Activated CD4-positive, alpha-beta T cell treated with anti-CD3 and anti-CD28 coated beads for 36 hours (primary cell): ENCODE measurements at regions of chr12 and their contacts with region 1.

Region 1: GRCh38 chr12:4538207-4539160 is at the start of gene RAD51AP1:
- DNase-seq: peak; percentile 97
- ATAC-seq: peak; percentile 97
- H3K4me3 Mint-ChIP-seq: peak within 1 kb of the TSS; percentile 91
- H3K27ac Mint-ChIP-seq: peak within 1 kb of the TSS; percentile 96
- H3K4me1 Mint-ChIP-seq: peaks cover 26% of the 10 kb centered on the region
- H3K27me3 Mint-ChIP-seq: no peaks in the 10 kb centered on the region
- total RNA-seq, gene RAD51AP1: 44.6 to 50.9 TPM

Region 2: DNA sequence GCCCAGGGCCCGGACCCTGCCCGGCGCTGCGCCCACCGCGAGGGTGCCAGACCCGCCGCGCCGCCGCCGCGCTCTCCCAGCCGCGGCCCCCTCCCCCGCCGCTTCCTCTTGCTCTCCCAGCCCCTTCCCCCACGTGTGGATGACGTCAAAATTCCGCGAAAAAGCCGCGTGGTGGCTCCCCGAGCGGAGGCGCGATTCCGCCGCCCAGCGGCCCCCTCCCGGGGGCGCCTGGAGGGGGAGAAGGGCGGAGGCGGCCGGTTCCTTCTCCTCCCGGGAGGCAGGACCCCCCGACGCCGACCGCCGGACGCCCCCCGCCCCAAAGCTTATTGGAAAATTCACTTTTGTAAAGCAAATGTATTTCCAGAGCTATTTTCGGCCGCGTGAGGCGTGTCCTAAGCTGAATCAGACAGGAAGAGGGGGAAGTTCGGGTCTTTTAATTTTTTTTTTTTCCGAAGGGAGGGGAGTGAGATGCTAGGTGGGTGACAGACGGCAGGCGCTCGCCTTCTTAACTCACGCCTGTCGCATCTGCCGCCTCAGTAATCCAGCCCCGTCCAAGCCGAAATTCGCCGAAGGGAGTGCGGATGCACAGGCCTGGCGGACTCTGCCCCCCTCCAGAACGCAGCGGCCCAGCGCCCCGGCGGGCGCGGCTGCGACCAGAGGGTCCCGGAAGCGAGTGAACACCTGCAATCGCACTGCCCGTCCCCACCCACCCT is 269.0 kb before region 1 on chr12:
- CTCF ChIA-PET with region 1: no interaction called
- POLR2A ChIA-PET with region 1: no interaction called
- intact Hi-C with region 1: loop called in 1 of 2 experiments (anchors 1 kb)
- DNase-seq: peak; percentile 97
- ATAC-seq: peak; percentile 14
- H3K4me3 Mint-ChIP-seq: peak overlapping the region; percentile 95
- H3K27ac Mint-ChIP-seq: peak overlapping the region; percentile 100
- H3K4me1 Mint-ChIP-seq: peaks cover 23% of the 10 kb centered on the region
- H3K27me3 Mint-ChIP-seq: no peaks in the 10 kb centered on the region

Region 3: DNA sequence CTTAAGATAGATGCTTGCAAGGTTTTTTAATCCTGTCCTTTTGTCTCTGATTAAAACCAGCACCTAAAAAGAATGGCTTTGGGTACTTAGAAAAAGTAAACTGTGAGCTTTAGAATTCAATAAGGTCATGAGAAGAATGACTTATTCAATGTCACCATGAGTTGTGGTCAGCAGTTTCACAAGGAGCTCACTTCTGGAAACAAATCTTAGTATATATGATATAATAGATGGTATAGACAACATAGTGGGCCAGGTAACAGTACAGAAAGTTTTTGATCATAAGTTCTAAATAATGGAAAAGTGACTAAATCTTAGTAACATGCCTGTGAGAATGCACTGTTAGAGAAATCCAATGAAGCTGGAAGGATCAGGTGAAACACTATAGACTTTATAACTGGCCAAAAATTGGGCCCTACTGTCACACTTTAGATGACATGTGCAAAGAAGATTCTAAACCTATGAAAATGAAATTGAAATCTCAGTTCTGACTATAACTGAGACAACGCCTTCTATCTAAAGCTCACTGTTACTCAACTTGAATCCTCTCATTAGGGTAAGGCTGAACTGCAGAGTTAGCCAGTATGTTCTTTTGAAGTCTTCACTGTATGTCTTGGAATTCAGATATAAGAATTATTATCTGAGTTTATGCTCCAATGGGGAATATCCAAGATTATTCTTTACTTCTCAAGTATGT is 42.2 kb before region 1 on chr12:
- CTCF ChIA-PET with region 1: no interaction called
- POLR2A ChIA-PET with region 1: no interaction called
- intact Hi-C with region 1: loop called in 1 of 2 experiments (anchors 5 kb)
- DNase-seq: no peak
- ATAC-seq: peak; percentile 98
- H3K4me3 Mint-ChIP-seq: no peak overlapping the region
- H3K27ac Mint-ChIP-seq: peak overlapping the region; percentile 80
- H3K4me1 Mint-ChIP-seq: peaks cover 19% of the 10 kb centered on the region
- H3K27me3 Mint-ChIP-seq: no peaks in the 10 kb centered on the region

Region 4: DNA sequence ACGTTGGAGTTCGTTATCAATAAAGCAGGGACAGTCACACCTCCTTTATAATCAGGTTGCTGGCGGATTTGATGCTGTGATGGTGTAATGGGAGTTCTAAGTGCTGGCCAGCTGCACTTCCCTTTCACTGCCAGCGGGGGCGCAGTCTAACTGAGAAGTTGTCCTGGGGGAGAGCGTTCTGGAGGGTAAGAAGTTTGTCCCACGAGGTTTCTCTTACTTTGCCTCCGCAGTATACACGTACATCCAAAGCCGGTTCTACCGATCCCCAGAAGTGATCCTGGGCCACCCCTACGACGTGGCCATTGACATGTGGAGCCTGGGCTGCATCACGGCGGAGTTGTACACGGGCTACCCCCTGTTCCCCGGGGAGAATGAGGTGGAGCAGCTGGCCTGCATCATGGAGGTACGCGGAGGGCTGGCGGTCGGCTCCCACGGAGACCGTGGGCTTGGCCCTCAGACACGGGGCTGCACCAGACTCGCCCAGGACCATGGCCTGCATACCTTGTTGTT is 66.3 kb after region 1 on chr12:
- CTCF ChIA-PET with region 1: no interaction called
- POLR2A ChIA-PET with region 1: no interaction called
- intact Hi-C with region 1: loop called in 1 of 2 experiments (anchors 1 kb)
- DNase-seq: peak; percentile 90
- ATAC-seq: peak; percentile 98
- H3K4me3 Mint-ChIP-seq: peak overlapping the region; percentile 95
- H3K27ac Mint-ChIP-seq: peak overlapping the region; percentile 96
- H3K4me1 Mint-ChIP-seq: peaks cover 18% of the 10 kb centered on the region
- H3K27me3 Mint-ChIP-seq: no peaks in the 10 kb centered on the region